Mammary epithelial cell (primary cell): ENCODE measurements at regions of chr11 and their contacts with region 1.

Region 1: DNA sequence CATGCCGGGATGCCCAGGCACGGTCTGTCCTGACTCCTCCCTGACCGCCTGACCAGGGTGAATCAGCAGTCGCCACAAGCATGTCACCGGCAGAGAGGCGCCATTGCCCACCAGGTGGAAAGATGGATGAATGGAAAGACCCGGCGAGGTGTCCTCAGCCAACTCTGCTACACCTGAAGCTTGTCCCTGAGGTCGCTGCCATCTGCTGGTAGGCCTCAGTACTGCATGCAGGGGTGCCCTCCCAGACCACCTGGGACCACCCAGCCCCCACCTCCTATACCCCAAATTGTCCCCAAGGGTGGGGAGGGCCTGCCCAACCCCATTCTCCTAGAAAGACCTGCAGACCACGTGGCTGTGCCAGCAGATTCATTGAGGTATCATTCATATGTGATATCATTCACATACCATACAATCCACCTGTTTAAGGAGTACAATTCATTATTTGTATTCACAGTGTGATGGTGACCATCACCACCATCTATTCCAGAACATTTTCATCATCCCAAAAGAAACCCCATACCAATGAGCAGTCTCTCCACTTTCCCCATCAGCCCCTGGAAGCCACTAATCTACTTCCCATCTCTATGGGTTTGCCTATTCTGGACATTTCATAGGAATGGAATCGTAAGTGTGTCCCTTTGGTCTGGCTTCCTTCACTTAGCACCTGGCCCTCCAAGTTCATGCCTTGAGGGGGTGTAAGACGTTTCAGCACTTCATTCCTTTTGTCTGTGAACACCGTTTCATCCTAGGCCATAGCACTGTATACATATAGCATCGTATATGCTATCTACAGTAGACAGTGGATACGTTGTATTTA is 17.5 kb downstream of the FGF3 start:
- DNase-seq: no peak
- H3K4me3 ChIP-seq: no peak overlapping the region
- H3K27ac ChIP-seq: no peak overlapping the region
- H3K4me1 ChIP-seq: no peaks in the 10 kb centered on the region
- H3K27me3 ChIP-seq: no peaks in the 10 kb centered on the region
- CTCF ChIP-seq: peak; percentile 67 to 84

Region 2: GRCh38 chr11:69598157-69598556 is 203.6 kb before region 1 on chr11:
- CTCF ChIA-PET with region 1: no interaction called
- dilution Hi-C with region 1: no loop called
- in situ Hi-C with region 1: no loop called
- intact Hi-C with region 1: no loop called
- DNase-seq: no peak
- H3K4me3 ChIP-seq: no peak overlapping the region
- H3K27ac ChIP-seq: no peak overlapping the region
- H3K4me1 ChIP-seq: peaks cover 7% of the 10 kb centered on the region
- H3K27me3 ChIP-seq: no peaks in the 10 kb centered on the region
- CTCF ChIP-seq: peak in 1 of 2 donors; percentile 25

Region 3: GRCh38 chr11:69704508-69705253 is 97.0 kb before region 1 on chr11:
- CTCF ChIA-PET with region 1: no interaction called
- dilution Hi-C with region 1: no loop called
- in situ Hi-C with region 1: no loop called
- intact Hi-C with region 1: loop called (anchors 2 kb)
- DNase-seq: no peak
- H3K4me3 ChIP-seq: no peak overlapping the region
- H3K27ac ChIP-seq: no peak overlapping the region
- H3K4me1 ChIP-seq: peaks cover 19% of the 10 kb centered on the region
- H3K27me3 ChIP-seq: peaks cover 8% of the 10 kb centered on the region
- CTCF ChIP-seq: no peak

Region 4: DNA sequence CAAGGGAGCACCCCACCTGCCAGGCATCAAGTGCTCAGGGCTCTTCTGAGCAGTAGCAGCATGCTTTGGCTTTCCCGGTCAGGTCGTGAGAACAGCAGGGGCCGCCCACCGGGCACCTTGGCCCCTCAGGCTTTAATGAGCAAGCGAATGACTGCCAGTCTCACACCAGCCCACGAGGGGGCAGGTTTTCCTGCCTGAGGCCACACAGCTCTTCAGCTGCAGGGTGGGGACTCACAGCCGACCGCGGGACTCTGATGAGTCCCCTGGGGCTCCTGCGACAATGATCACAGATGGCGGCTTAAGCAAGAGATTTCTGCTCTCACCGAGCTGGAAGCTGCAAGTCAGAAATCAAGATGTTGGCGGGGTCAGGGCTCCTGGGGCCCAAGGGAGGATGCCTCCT is 83.6 kb before region 1 on chr11:
- CTCF ChIA-PET with region 1: no interaction called
- dilution Hi-C with region 1: loop called (anchors 5 kb)
- in situ Hi-C with region 1: no loop called
- intact Hi-C with region 1: no loop called
- DNase-seq: no peak
- H3K4me3 ChIP-seq: no peak overlapping the region
- H3K27ac ChIP-seq: no peak overlapping the region
- H3K4me1 ChIP-seq: no peaks in the 10 kb centered on the region
- H3K27me3 ChIP-seq: peaks cover 2% of the 10 kb centered on the region
- CTCF ChIP-seq: peak; percentile 11 to 27

Region 5: GRCh38 chr11:69732910-69733309 is 68.8 kb before region 1 on chr11:
- CTCF ChIA-PET with region 1: no interaction called
- dilution Hi-C with region 1: no loop called
- in situ Hi-C with region 1: no loop called
- intact Hi-C with region 1: no loop called
- DNase-seq: no peak
- H3K4me3 ChIP-seq: no peak overlapping the region
- H3K27ac ChIP-seq: no peak overlapping the region
- H3K4me1 ChIP-seq: no peaks in the 10 kb centered on the region
- H3K27me3 ChIP-seq: peaks cover 2% of the 10 kb centered on the region
- CTCF ChIP-seq: no peak

Region 6: DNA sequence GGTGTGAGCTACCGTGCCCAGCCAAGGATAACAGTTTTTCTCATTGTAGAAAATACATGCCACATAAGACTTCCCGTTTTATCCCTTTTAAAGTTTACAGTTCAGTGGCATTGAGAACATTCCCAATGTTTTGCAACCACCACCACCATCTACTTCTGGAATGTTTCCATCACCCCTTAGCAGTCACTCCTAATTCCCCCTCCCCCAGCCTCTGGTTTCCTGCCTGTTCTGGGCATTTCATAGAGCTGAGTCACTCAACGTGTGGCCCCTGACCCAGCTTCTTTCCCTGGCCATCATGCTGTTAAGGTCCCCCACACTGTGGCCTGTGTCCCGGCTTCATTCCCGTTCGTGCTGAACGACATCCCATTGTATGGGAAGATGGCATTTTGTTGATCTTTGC is 57.3 kb before region 1 on chr11:
- CTCF ChIA-PET with region 1: no interaction called
- dilution Hi-C with region 1: no loop called
- in situ Hi-C with region 1: no loop called
- intact Hi-C with region 1: no loop called
- DNase-seq: no peak
- H3K4me3 ChIP-seq: no peak overlapping the region
- H3K27ac ChIP-seq: no peak overlapping the region
- H3K4me1 ChIP-seq: no peaks in the 10 kb centered on the region
- H3K27me3 ChIP-seq: peaks cover 5% of the 10 kb centered on the region
- CTCF ChIP-seq: no peak

Region 7: GRCh38 chr11:69867738-69868493 is 66.2 kb after region 1 on chr11:
- CTCF ChIA-PET with region 1: no interaction called
- dilution Hi-C with region 1: loop called (anchors 10 kb)
- in situ Hi-C with region 1: no loop called
- intact Hi-C with region 1: no loop called
- DNase-seq: no peak
- H3K4me3 ChIP-seq: no peak overlapping the region
- H3K27ac ChIP-seq: no peak overlapping the region
- H3K4me1 ChIP-seq: no peaks in the 10 kb centered on the region
- H3K27me3 ChIP-seq: no peaks in the 10 kb centered on the region
- CTCF ChIP-seq: no peak

Region 8: DNA sequence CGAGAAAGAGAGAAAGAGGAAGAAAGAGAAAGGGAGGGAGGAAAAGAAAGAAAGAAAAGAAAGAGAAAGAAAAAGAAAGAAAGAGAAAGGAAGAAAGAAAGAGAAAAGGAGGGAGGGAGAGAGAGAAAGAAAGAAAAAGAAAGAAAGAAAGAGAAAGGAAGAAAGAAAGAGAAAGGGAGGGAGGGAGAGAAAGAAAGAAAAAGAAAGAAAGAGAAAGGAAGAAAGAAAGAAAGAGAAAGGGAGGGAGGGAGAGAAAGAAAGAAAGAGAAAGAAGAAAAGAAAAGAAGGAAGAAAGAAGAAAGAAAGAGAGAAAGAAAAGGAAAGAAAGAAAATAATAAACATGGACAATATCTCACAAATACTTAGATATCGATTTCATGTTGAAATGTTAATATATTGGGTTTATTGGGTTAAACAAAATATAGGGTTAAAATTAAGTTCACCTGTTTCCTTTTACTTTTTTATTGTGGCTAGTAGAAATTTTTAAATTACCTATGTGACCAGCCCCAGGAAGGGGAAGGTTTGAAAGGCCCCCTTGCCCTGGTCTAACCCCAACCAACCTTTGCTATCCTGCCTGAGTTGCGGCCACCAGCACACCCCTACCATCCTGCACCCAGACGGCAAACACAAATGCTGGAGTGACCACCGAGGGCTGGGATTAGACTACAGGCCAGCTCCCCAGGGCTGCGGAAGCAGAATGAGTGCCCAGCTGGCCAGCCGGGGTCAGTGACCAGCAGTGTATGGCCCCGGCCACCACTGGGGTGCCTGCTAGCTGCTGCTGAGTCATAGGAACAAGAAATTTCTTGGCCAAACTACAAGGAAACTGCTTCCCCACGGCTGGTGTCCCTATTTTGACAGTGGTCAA is 98.5 kb after region 1 on chr11:
- CTCF ChIA-PET with region 1: no interaction called
- dilution Hi-C with region 1: loop called (anchors 5 kb)
- in situ Hi-C with region 1: no loop called
- intact Hi-C with region 1: no loop called
- DNase-seq: no peak
- H3K4me3 ChIP-seq: no peak overlapping the region
- H3K27ac ChIP-seq: no peak overlapping the region
- H3K4me1 ChIP-seq: no peaks in the 10 kb centered on the region
- H3K27me3 ChIP-seq: no peaks in the 10 kb centered on the region
- CTCF ChIP-seq: no peak